Mammary epithelial cell (primary cell): ENCODE measurements at regions of chr12 and their contacts with region 1.

Region 1: GRCh38 chr12:127381048-127381668 is 885.8 kb upstream of the TMEM132C start:
- DNase-seq: peak; percentile 21
- H3K4me3 ChIP-seq: peak overlapping the region; percentile 37 to 43 (median 42)
- H3K27ac ChIP-seq: no peak overlapping the region
- H3K4me1 ChIP-seq: peaks cover 3% of the 10 kb centered on the region
- H3K27me3 ChIP-seq: no peaks in the 10 kb centered on the region
- CTCF ChIP-seq: peak; percentile 79 to 89

Region 2: DNA sequence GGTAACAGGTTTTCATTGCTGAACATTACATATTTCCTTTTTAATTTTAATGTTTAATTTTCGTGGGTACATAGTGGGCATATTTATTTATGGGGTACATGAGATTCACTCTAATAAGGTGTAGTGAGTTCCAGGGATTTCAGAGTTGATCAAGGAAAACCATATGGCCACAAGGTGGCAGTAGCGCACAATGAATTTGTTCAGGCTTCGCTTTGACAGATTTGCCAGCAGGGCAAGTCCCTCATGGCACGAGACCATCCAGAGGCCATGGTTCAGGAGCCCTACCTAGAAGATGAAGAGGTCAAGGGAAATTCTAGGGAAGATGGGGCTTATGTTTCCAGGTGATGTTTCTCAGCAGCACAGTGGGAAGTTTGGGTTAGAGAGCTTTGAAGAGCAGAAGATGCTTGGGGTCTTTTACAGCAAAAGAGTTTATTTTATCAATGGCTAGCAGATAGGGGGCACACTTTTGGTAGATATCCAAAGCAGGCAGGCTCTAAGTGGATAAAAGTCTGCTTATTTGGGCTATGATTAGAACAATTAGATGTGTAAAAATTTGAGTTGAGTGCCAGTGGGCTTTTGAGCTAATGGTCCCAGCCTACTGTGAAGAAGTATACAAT is 1311.5 kb before region 1 on chr12:
- CTCF ChIA-PET with region 1: no interaction called
- dilution Hi-C with region 1: no loop called
- in situ Hi-C with region 1: loop called in 1 of 2 experiments (anchors 25 kb)
- intact Hi-C with region 1: no loop called
- DNase-seq: peak; percentile 36
- H3K4me3 ChIP-seq: no peak overlapping the region
- H3K27ac ChIP-seq: no peak overlapping the region
- H3K4me1 ChIP-seq: no peaks in the 10 kb centered on the region
- H3K27me3 ChIP-seq: no peaks in the 10 kb centered on the region
- CTCF ChIP-seq: peak; percentile 51 to 56

Region 3: DNA sequence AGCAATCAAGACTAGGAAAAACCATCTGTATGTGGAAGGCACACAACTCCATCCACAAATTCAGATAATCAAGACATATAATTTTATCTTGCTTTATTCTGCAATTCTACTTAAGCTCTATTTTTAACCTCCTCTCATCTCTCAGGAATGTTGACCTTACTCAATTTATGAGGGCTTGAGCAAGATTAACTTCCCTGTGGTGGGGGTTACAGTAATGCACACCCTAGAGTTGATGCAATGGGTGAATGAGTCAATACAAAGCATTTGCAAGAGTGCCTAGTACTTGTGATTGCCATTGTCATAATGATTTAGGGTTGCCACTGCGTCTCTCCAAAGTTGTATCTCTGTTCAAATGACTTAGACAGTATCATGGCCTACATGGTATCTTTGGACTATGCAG is 712.6 kb before region 1 on chr12:
- CTCF ChIA-PET with region 1: no interaction called
- dilution Hi-C with region 1: no loop called
- in situ Hi-C with region 1: no loop called
- intact Hi-C with region 1: loop called (anchors 5 kb)
- DNase-seq: peak; percentile 5
- H3K4me3 ChIP-seq: no peak overlapping the region
- H3K27ac ChIP-seq: peak overlapping the region; percentile 30
- H3K4me1 ChIP-seq: peaks cover 4% of the 10 kb centered on the region
- H3K27me3 ChIP-seq: no peaks in the 10 kb centered on the region
- CTCF ChIP-seq: no peak

Region 4: GRCh38 chr12:126784328-126784921 is 596.7 kb before region 1 on chr12:
- CTCF ChIA-PET with region 1: no interaction called
- dilution Hi-C with region 1: loop called (anchors 10 kb)
- in situ Hi-C with region 1: no loop called
- intact Hi-C with region 1: loop called (anchors 1 kb)
- DNase-seq: peak; percentile 14
- H3K4me3 ChIP-seq: no peak overlapping the region
- H3K27ac ChIP-seq: no peak overlapping the region
- H3K4me1 ChIP-seq: no peaks in the 10 kb centered on the region
- H3K27me3 ChIP-seq: no peaks in the 10 kb centered on the region
- CTCF ChIP-seq: peak; percentile 39 to 48

Region 5: GRCh38 chr12:126926023-126926594 is 455.0 kb before region 1 on chr12:
- CTCF ChIA-PET with region 1: interaction called, 9 read pairs
- dilution Hi-C with region 1: no loop called
- in situ Hi-C with region 1: no loop called
- intact Hi-C with region 1: loop called (anchors 5 kb)
- DNase-seq: peak; percentile 4
- H3K4me3 ChIP-seq: no peak overlapping the region
- H3K27ac ChIP-seq: no peak overlapping the region
- H3K4me1 ChIP-seq: no peaks in the 10 kb centered on the region
- H3K27me3 ChIP-seq: no peaks in the 10 kb centered on the region
- CTCF ChIP-seq: peak in 1 of 2 donors; percentile 44

Region 6: GRCh38 chr12:127025545-127025944 is 355.6 kb before region 1 on chr12:
- CTCF ChIA-PET with region 1: no interaction called
- dilution Hi-C with region 1: no loop called
- in situ Hi-C with region 1: no loop called
- intact Hi-C with region 1: loop called (anchors 1 kb)
- DNase-seq: no peak
- H3K4me3 ChIP-seq: no peak overlapping the region
- H3K27ac ChIP-seq: no peak overlapping the region
- H3K4me1 ChIP-seq: no peaks in the 10 kb centered on the region
- H3K27me3 ChIP-seq: no peaks in the 10 kb centered on the region
- CTCF ChIP-seq: peak; percentile 50 to 58

Region 7: GRCh38 chr12:127343940-127344339 is 37.2 kb before region 1 on chr12:
- CTCF ChIA-PET with region 1: no interaction called
- dilution Hi-C with region 1: no loop called
- in situ Hi-C with region 1: no loop called
- intact Hi-C with region 1: no loop called
- DNase-seq: no peak
- H3K4me3 ChIP-seq: no peak overlapping the region
- H3K27ac ChIP-seq: no peak overlapping the region
- H3K4me1 ChIP-seq: no peaks in the 10 kb centered on the region
- H3K27me3 ChIP-seq: no peaks in the 10 kb centered on the region
- CTCF ChIP-seq: no peak

Region 8: GRCh38 chr12:127696963-127697362 is 315.8 kb after region 1 on chr12:
- CTCF ChIA-PET with region 1: no interaction called
- dilution Hi-C with region 1: no loop called
- in situ Hi-C with region 1: no loop called
- intact Hi-C with region 1: no loop called
- DNase-seq: no peak
- H3K4me3 ChIP-seq: no peak overlapping the region
- H3K27ac ChIP-seq: no peak overlapping the region
- H3K4me1 ChIP-seq: no peaks in the 10 kb centered on the region
- H3K27me3 ChIP-seq: no peaks in the 10 kb centered on the region
- CTCF ChIP-seq: no peak